Motor neuron (in vitro differentiated cells): ENCODE measurements at regions of chr11 and their contacts with region 1.

Region 1: GRCh38 chr11:78659326-78660270 is 84.9 kb upstream of the NARS2 start:
- ATAC-seq: peak in 3 of 8 experiments; percentile 36 to 55 (median 50)
- H3K4me3 ChIP-seq: no peak overlapping the region
- H3K27ac ChIP-seq: no peak overlapping the region
- H3K4me1 ChIP-seq: no peaks in the 10 kb centered on the region

Region 2: GRCh38 chr11:78290293-78291176 is 369.1 kb before region 1 on chr11:
- in situ Hi-C with region 1: no loop called
- ATAC-seq: peak in 3 of 8 experiments; percentile 25 to 54 (median 33)
- H3K4me3 ChIP-seq: no peak overlapping the region
- H3K27ac ChIP-seq: no peak overlapping the region
- H3K4me1 ChIP-seq: peaks cover 5 to 12% of the 10 kb centered on the region in 2 donors

Region 3: DNA sequence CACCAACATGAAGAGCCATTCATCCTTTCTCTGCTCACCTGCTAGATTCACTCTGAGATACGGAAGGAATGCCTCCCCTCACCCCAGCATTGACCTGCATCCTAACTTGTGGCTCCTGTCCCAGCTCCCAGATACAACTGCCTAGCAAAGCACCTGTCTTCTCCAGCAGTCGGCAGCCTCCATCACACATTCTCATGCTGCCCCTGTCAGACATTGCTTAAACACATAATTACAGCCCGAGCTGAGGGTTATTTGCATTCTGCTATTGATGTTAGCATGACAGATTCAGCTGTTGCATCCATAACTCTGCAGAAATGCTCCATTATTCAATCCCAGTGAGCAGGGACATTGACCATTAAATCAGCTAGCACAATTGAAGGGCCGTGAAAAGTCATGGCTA is 99.5 kb after region 1 on chr11:
- in situ Hi-C with region 1: loop called in 1 of 9 experiments (anchors 25 kb)
- ATAC-seq: peak in 5 of 8 experiments; percentile 78 to 96 (median 91)
- H3K4me3 ChIP-seq: no peak overlapping the region
- H3K27ac ChIP-seq: no peak overlapping the region
- H3K4me1 ChIP-seq: peaks cover 5 to 14% of the 10 kb centered on the region in 2 donors

Region 4: GRCh38 chr11:79076526-79077115 is 417.0 kb after region 1 on chr11:
- in situ Hi-C with region 1: loop called in 1 of 9 experiments (anchors 25 kb)
- ATAC-seq: peak in 3 of 8 experiments; percentile 55 to 60 (median 60)
- H3K4me3 ChIP-seq: no peak overlapping the region
- H3K27ac ChIP-seq: no peak overlapping the region
- H3K4me1 ChIP-seq: peaks cover 21 to 24% of the 10 kb centered on the region in 2 donors